WTC11 (cell line): ENCODE measurements at regions of chr6 and their contacts with region 1.

Region 1: GRCh38 chr6:34414999-34415858 is 10.6 kb downstream of the RPS10 start:
- DNase-seq: no peak
- ATAC-seq: peak; percentile 13
- H3K4me3 Mint-ChIP-seq: no peak overlapping the region
- H3K27ac Mint-ChIP-seq: peak overlapping the region; percentile 59; the same call in 1 of the 2 replicates
- H3K4me1 Mint-ChIP-seq: no peaks in the 10 kb centered on the region
- H3K27me3 Mint-ChIP-seq: no peaks in the 10 kb centered on the region
- CTCF ChIP-seq: no peak

Region 2: GRCh38 chr6:34425498-34426410 is 10.5 kb after region 1 on chr6 and contains the start of gene RPS10:
- CTCF ChIA-PET with region 1: interaction called, 4 read pairs
- POLR2A ChIA-PET with region 1: interaction called, 20 read pairs
- DNase-seq: peak; percentile 91
- ATAC-seq: peak; percentile 91
- H3K4me3 Mint-ChIP-seq: peak within 1 kb of the TSS; percentile 97
- H3K27ac Mint-ChIP-seq: peak within 1 kb of the TSS; percentile 99
- H3K4me1 Mint-ChIP-seq: peaks cover 29% of the 10 kb centered on the region
- H3K27me3 Mint-ChIP-seq: 0 out of 2 replicates have a peak, but pooled peaks cover 2% of the 10 kb centered on the region
- CTCF ChIP-seq: no peak
- total RNA-seq, gene RPS10: 2,184 to 2,437 TPM (median 2,411 TPM) in 3 replicates

Region 3: GRCh38 chr6:34447910-34448309 is 32.7 kb after region 1 on chr6:
- CTCF ChIA-PET with region 1: no interaction called
- POLR2A ChIA-PET with region 1: interaction called, 13 read pairs
- DNase-seq: peak; percentile 69
- ATAC-seq: peak; percentile 96
- H3K4me3 Mint-ChIP-seq: no peak overlapping the region
- H3K27ac Mint-ChIP-seq: peak overlapping the region; percentile 71; the same call in 1 of the 2 replicates
- H3K4me1 Mint-ChIP-seq: peaks cover 12% of the 10 kb centered on the region
- H3K27me3 Mint-ChIP-seq: no peaks in the 10 kb centered on the region
- CTCF ChIP-seq: no peak